ENCODE measurements at regions of chr12 and their contacts with region 1.

Region 1: DNA sequence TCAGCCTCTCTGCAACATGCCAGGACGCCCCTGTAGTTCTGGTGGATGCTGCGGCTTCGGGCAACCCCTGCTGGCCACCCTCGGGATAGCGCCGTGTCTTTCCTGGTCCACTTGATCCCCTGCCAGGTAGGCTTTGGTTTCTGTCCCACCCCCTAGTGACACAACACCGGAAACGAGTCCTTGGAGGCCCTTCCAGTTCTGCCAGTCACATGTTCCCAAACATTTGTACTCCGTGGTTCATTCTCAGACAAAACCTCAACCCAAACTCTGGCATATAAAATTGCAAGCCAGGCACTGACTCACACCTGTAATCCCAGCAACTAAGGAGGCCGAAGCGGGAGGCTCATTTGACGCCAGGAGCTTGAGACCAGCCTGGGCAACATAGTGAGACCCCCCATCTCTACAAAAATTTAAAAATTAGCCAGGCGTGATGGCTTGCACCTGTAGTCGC is 37.1 kb downstream of the RASAL1 start:
- DNase-seq: peak; percentile 72 to 79 (median 79)
- H3K4me3 ChIP-seq: no peak overlapping the region
- H3K27ac ChIP-seq: no peak overlapping the region
- H3K4me1 ChIP-seq: peaks cover 0 to 6% (median under 1%) of the 10 kb centered on the region in 4 experiments
- H3K27me3 ChIP-seq: peaks cover 0 to under 1% (median 0%) of the 10 kb centered on the region in 5 experiments

Region 2: DNA sequence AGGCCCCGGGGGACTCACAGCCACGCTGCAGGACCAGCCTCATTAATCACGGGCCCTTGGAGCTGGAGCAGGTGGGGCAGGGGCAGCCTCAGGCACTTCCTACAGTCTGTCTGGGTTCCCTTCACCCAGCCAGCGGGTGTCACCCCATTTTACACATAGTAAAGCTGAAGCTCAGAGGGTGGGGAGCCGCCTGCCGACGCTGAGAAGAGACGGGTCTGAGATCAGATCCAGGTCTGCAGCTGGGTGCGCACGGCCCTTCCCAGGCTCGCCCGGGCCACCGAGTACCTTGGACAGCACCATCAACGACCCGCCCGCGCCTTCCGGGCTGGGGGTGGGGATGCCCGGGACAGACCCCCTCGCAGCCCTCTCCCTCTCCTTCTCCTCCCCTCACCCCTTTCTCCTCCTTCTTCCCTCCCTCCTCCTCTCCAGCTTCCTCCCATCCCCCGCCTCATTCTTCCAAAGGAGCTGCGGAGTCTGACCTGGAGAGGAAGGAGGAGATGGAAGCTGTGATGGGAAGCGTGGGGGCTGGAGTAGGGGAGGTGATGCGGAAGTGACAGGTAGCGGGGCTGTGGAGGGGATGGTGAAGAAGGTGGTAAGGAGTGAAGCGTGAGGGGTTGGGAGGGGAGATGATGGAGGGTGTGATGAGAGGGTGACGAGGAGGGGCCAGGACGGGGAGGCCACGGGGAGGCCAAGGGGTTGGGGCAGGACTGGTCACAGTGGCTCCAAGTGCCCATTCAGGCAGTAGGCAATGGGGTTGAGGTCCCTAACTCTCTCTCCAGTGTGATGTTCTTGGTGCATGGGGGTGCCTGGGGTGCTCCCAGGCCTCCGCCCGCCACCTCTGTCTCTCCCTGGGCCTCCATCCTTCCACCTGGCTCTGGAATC is 33.1 kb before region 1 on chr12:
- CTCF ChIA-PET with region 1: interaction called, 16 read pairs
- POLR2A ChIA-PET with region 1: no interaction called
- DNase-seq: peak in 2 of 3 donors; percentile 57 to 64
- H3K4me3 ChIP-seq: no peak overlapping the region
- H3K27ac ChIP-seq: no peak overlapping the region
- H3K4me1 ChIP-seq: peaks cover 0 to 42% (median 17%) of the 10 kb centered on the region in 4 experiments
- H3K27me3 ChIP-seq: peaks cover 0 to 5% (median 0%) of the 10 kb centered on the region in 5 experiments

Region 3: GRCh38 chr12:113152835-113153814 is 54.7 kb after region 1 on chr12:
- CTCF ChIA-PET with region 1: interaction called, 16 read pairs
- POLR2A ChIA-PET with region 1: no interaction called
- DNase-seq: peak; percentile 74 to 88 (median 87)
- H3K4me3 ChIP-seq: peak overlapping the region; percentile 23 to 67 (median 61)
- H3K27ac ChIP-seq: no peak overlapping the region
- H3K4me1 ChIP-seq: peaks cover 0 to 51% (median 45%) of the 10 kb centered on the region in 4 experiments
- H3K27me3 ChIP-seq: peaks cover 0 to 32% (median 12%) of the 10 kb centered on the region in 5 experiments